Activated CD4-positive, alpha-beta T cell treated with anti-CD3 and anti-CD28 coated beads, Interleukin-2, amount 10 ng/mL, durations not matched to agents 24 days and 14 days (primary cell): ENCODE measurements at regions of chr7 and their contacts with region 1.

Region 1: GRCh38 chr7:130242198-130243014 is 24.3 kb upstream of the CPA2 start:
- DNase-seq: peak; percentile 84
- H3K4me3 Mint-ChIP-seq: no peak overlapping the region
- H3K27ac Mint-ChIP-seq: no peak overlapping the region
- H3K4me1 Mint-ChIP-seq: peaks cover 14% of the 10 kb centered on the region
- H3K27me3 Mint-ChIP-seq: peaks cover 4% of the 10 kb centered on the region

Region 2: GRCh38 chr7:130560970-130561369 is 318.6 kb after region 1 on chr7:
- intact Hi-C with region 1: loop called (anchors 2 kb)
- DNase-seq: peak; percentile 63
- H3K4me3 Mint-ChIP-seq: no peak overlapping the region
- H3K27ac Mint-ChIP-seq: no peak overlapping the region
- H3K4me1 Mint-ChIP-seq: no peaks in the 10 kb centered on the region
- H3K27me3 Mint-ChIP-seq: no peaks in the 10 kb centered on the region

Region 3: GRCh38 chr7:130758429-130759056 is 516.1 kb after region 1 on chr7:
- intact Hi-C with region 1: loop called (anchors 5 kb)
- DNase-seq: no peak
- H3K4me3 Mint-ChIP-seq: no peak overlapping the region
- H3K27ac Mint-ChIP-seq: no peak overlapping the region
- H3K4me1 Mint-ChIP-seq: no peaks in the 10 kb centered on the region
- H3K27me3 Mint-ChIP-seq: peaks cover 17% of the 10 kb centered on the region

Region 4: GRCh38 chr7:130831817-130832481 is 589.5 kb after region 1 on chr7:
- intact Hi-C with region 1: loop called (anchors 10 kb)
- DNase-seq: peak; percentile 60
- H3K4me3 Mint-ChIP-seq: no peak overlapping the region
- H3K27ac Mint-ChIP-seq: no peak overlapping the region
- H3K4me1 Mint-ChIP-seq: no peaks in the 10 kb centered on the region
- H3K27me3 Mint-ChIP-seq: peaks cover 26% of the 10 kb centered on the region